PC-3 (cell line): ENCODE measurements at regions of chr4 and their contacts with region 1.

Region 1: GRCh38 chr4:147707865-147708672 is 23.8 kb upstream of the ARHGAP10 start:
- DNase-seq: peak; percentile 64
- ATAC-seq: peak; percentile 66
- H3K4me3 ChIP-seq: no peak overlapping the region
- H3K27ac ChIP-seq: no peak overlapping the region
- H3K4me1 ChIP-seq: no peaks in the 10 kb centered on the region
- H3K27me3 ChIP-seq: no peaks in the 10 kb centered on the region
- CTCF ChIP-seq: peak; percentile 87

Region 2: GRCh38 chr4:147596981-147597380 is 111.1 kb before region 1 on chr4:
- CTCF ChIA-PET with region 1: no interaction called
- POLR2A ChIA-PET with region 1: no interaction called
- intact Hi-C with region 1: loop called (anchors 2 kb)
- DNase-seq: peak; percentile 90
- ATAC-seq: peak; percentile 88
- H3K4me3 ChIP-seq: no peak overlapping the region
- H3K27ac ChIP-seq: no peak overlapping the region
- H3K4me1 ChIP-seq: peaks cover 15% of the 10 kb centered on the region
- H3K27me3 ChIP-seq: no peaks in the 10 kb centered on the region
- CTCF ChIP-seq: no peak